Heart left ventricle (tissue), 16 donors: ENCODE measurements at regions of chr15 and their contacts with region 1.

Region 1: GRCh38 chr15:70569091-70569621 is 194.2 kb downstream of the UACA start:
- DNase-seq: peak in 1 of 5 donors; percentile 34
- ATAC-seq: peak; percentile 82 to 95 (median 90)
- H3K4me3 ChIP-seq: no peak overlapping the region
- H3K27ac ChIP-seq: no peak overlapping the region
- H3K4me1 ChIP-seq: peaks cover 0 to 16% (median 3%) of the 10 kb centered on the region in 12 donors
- H3K27me3 ChIP-seq: no peaks in the 10 kb centered on the region
- CTCF ChIP-seq: peak; percentile 35 to 71 (median 60)
- POLR2A ChIP-seq: no peak

Region 2: DNA sequence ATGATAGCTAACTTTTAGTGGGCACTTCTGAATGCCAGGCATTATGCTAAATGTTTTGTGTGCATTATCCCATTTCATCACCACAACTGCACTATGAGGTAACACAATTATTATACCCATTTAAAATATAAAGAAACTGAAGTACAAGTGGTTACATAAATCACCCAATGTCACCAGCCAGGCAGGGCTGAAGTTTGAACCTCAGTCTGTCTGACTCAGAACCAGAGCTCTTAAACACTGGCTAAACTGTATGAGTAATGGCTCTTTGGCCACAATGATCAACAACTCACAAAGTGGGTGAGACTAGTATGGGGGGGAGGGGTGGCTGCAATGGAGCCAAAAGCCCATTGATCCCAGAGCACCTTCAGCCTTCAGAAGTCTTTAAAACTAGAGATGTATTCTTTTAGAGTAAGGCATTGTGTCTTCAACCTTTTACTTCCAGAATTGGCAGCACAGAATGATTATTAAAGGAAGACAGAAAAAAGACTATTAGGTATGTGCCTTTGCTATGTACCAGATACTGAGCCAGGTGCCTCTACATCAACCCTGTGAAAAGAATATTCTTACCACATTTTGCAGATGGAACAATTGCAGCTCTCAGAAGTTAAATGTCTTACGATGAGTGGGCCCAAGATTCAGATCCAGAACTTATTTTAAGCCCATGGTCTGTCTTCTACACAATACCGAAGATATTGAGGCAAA is 27.3 kb after region 1 on chr15:
- intact Hi-C with region 1: no loop called
- DNase-seq: no peak
- ATAC-seq: no peak
- H3K4me3 ChIP-seq: no peak overlapping the region
- H3K27ac ChIP-seq: no peak overlapping the region
- H3K4me1 ChIP-seq: no peaks in the 10 kb centered on the region
- H3K27me3 ChIP-seq: no peaks in the 10 kb centered on the region
- CTCF ChIP-seq: no peak
- POLR2A ChIP-seq: no peak

Region 3: GRCh38 chr15:70636540-70637165 is 67.5 kb after region 1 on chr15:
- intact Hi-C with region 1: loop called in 4 of 10 experiments (anchors 5 to 10 kb)
- DNase-seq: no peak
- ATAC-seq: peak in 2 of 4 donors; percentile 27 to 49
- H3K4me3 ChIP-seq: no peak overlapping the region
- H3K27ac ChIP-seq: no peak overlapping the region
- H3K4me1 ChIP-seq: peaks cover 0 to 11% (median 5%) of the 10 kb centered on the region in 12 donors
- H3K27me3 ChIP-seq: no peaks in the 10 kb centered on the region
- CTCF ChIP-seq: peak in 5 of 12 donors; percentile 18 to 47 (median 24)
- POLR2A ChIP-seq: no peak

Region 4: GRCh38 chr15:70722266-70723121 is 153.3 kb after region 1 on chr15:
- intact Hi-C with region 1: loop called in 2 of 10 experiments (anchors 10 kb)
- DNase-seq: no peak
- ATAC-seq: no peak
- H3K4me3 ChIP-seq: no peak overlapping the region
- H3K27ac ChIP-seq: no peak overlapping the region
- H3K4me1 ChIP-seq: peaks cover 0 to 66% (median 33%) of the 10 kb centered on the region in 12 donors
- H3K27me3 ChIP-seq: no peaks in the 10 kb centered on the region
- CTCF ChIP-seq: peak; percentile 59 to 88 (median 77)
- POLR2A ChIP-seq: no peak

Region 5: DNA sequence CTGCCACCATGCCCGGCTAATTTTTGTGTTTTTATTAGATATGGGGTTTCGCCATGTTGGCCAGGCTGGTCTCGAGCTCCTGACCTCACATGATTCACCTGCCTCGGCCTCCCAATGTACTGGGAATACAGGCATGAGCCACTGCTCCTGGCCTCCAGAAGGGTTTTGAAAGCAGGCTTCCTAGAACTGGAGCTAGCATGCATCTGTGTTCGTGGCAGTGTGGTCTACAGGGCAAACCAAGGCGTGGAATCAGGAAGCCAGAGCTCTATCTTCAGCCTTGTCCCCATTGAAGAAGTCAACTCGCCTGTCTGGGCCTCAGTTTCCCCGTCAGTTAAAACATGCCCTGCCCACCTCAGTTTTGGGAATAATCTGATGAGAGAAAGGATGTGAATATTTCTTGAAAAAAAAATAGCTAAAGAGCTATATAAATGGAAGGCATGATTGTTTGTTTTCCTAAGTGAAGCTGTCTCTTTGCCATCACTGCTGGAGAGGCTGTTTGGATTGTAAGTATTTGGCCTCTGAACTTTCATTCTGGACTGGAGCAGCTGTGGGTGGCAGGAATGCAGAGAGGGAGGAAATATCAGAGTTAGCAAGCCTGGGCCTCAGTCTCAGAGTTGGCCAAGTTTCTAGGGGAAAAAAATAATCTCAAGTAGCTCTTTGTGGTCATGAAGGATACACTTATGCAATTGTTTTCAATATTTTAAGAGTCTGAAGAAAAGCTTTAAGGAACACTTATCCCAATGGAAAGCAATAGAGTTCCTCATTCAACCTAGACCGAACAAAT is 230.7 kb after region 1 on chr15:
- intact Hi-C with region 1: loop called in 1 of 10 experiments (anchors 10 kb)
- DNase-seq: peak in 4 of 5 donors; percentile 36 to 55 (median 44)
- ATAC-seq: peak; percentile 71 to 84 (median 79)
- H3K4me3 ChIP-seq: no peak overlapping the region
- H3K27ac ChIP-seq: peak overlapping the region; percentile 36 to 79 (median 54)
- H3K4me1 ChIP-seq: peaks cover 0 to 43% (median 14%) of the 10 kb centered on the region in 12 donors
- H3K27me3 ChIP-seq: no peaks in the 10 kb centered on the region
- CTCF ChIP-seq: no peak
- POLR2A ChIP-seq: no peak

Region 6: GRCh38 chr15:70806992-70807712 is 238.0 kb after region 1 on chr15:
- intact Hi-C with region 1: loop called in 8 of 10 experiments (anchors 5 to 10 kb)
- DNase-seq: peak; percentile 58 to 80 (median 67)
- ATAC-seq: peak; percentile 7 to 73 (median 46)
- H3K4me3 ChIP-seq: no peak overlapping the region
- H3K27ac ChIP-seq: peak overlapping the region in 8 of 12 donors; percentile 7 to 72 (median 48)
- H3K4me1 ChIP-seq: peaks cover 0 to 45% (median 10%) of the 10 kb centered on the region in 12 donors
- H3K27me3 ChIP-seq: no peaks in the 10 kb centered on the region
- CTCF ChIP-seq: no peak
- POLR2A ChIP-seq: no peak

Region 7: GRCh38 chr15:70815644-70816043 is 246.5 kb after region 1 on chr15:
- intact Hi-C with region 1: loop called in 7 of 10 experiments (anchors 5 to 10 kb)
- DNase-seq: no peak
- ATAC-seq: no peak
- H3K4me3 ChIP-seq: no peak overlapping the region
- H3K27ac ChIP-seq: no peak overlapping the region
- H3K4me1 ChIP-seq: peaks cover 0 to 17% (median 3%) of the 10 kb centered on the region in 12 donors
- H3K27me3 ChIP-seq: no peaks in the 10 kb centered on the region
- CTCF ChIP-seq: no peak
- POLR2A ChIP-seq: no peak